Endothelial cell of umbilical vein (primary cell): ENCODE measurements at regions of chr2 and their contacts with region 1.

Region 1: DNA sequence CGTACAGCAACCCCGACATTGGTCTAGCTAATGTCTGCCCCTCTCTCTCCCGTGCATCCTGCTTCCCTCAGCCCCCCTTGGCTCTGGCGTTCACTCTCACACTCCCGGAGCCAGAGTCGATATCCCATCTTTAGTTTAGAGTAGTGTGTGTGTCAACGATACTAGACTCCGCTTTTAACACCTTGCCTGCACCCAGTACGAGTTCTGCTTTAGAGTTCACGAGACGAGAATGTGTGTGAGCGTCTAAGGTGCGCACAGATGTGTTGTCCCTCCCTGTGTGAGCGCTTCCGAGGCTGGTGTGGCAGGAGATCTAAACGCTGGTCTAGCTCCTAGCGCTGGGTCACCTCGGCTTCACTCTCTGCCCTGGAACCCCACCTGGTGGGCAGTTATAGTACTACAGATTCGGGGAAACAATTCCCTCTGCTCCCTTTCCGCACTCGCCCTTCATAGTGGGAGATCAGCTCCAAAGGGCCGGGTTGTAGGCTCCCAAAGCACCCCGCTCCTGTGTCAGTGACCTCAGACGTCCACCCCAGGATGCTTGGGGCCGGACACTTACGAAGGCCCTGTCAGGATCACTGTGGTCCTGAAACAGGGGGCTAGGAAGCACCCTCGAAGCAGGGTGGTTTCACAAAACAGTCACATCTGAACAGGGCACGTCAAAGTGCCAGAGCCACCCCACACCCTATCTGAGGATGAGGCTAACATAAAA is 2.6 kb upstream of the CYP26B1 start:
- DNase-seq: peak; percentile 77
- H3K4me3 ChIP-seq: no peak overlapping the region
- H3K27ac ChIP-seq: no peak overlapping the region
- H3K4me1 ChIP-seq: peaks cover 15% of the 10 kb centered on the region
- H3K27me3 ChIP-seq: peaks cover 33 to 48% of the 10 kb centered on the region in 2 experiments
- CTCF ChIP-seq: peak; percentile 66 to 85
- POLR2A ChIP-seq: no peak

Region 2: GRCh38 chr2:71530641-71531332 is 619.5 kb before region 1 on chr2:
- CTCF ChIA-PET with region 1: interaction called, 26 read pairs
- POLR2A ChIA-PET with region 1: no interaction called
- dilution Hi-C with region 1: no loop called
- intact Hi-C with region 1: no loop called
- DNase-seq: peak; percentile 64
- H3K4me3 ChIP-seq: no peak overlapping the region
- H3K27ac ChIP-seq: peak overlapping the region; percentile 40
- H3K4me1 ChIP-seq: peaks cover 7% of the 10 kb centered on the region
- H3K27me3 ChIP-seq: no peaks in the 10 kb centered on the region
- CTCF ChIP-seq: peak; percentile 64 to 67
- POLR2A ChIP-seq: no peak

Region 3: DNA sequence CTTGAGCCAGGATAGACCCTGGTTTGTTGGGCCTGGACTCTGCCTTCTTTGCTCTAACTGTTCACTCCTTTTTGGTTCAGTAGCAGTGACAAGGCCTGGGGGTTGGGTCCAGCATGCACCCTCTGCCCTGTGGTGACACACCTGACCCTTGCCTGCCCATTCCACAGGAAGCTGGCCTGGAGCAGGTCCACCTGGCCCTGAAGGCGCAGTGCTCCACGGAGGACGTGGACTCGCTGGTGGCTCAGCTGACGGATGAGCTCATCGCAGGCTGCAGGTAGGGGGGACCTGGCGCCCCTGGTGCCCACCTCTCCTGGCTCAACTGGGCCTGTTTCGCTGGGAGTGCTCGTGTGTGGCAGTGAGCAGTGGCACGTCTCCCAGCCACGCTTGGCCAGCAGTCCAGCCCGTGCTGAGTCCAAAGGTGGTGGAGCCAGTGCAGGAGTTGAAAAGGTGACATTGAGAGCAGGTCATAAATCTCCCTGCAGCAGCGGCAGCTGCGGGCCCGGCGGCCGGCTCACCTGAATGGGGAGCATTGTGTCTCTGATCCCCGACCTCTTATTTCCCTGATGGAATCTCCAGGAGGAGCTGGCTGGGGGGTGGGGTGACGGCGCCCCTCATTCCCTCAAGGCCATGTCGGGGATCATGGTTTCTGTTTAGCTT is 594.4 kb before region 1 on chr2:
- CTCF ChIA-PET with region 1: interaction called, 15 read pairs
- POLR2A ChIA-PET with region 1: no interaction called
- dilution Hi-C with region 1: no loop called
- intact Hi-C with region 1: no loop called
- DNase-seq: no peak
- H3K4me3 ChIP-seq: no peak overlapping the region
- H3K27ac ChIP-seq: no peak overlapping the region
- H3K4me1 ChIP-seq: peaks cover 10% of the 10 kb centered on the region
- H3K27me3 ChIP-seq: no peaks in the 10 kb centered on the region
- CTCF ChIP-seq: no peak
- POLR2A ChIP-seq: no peak

Region 4: DNA sequence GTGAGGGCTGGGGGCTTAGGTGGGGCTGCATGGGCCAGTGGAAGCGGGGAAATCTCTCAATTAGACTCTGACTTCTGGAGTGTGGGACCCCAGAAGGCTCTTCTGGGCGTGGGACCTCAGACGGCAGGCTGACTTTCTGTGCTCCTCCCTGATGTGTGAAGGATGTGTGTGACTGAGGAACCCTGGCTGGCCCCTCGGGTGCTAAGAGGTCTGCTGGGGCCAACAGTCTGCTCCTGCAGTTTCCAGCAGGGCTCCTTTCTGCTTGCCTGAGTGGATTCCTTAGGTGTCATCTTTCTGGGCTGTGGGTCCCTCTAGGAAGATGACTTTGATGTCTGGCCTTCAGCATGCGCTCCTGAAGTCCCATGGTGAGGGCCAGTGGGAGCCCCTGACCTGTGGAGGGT is 529.5 kb before region 1 on chr2:
- CTCF ChIA-PET with region 1: no interaction called
- POLR2A ChIA-PET with region 1: no interaction called
- dilution Hi-C with region 1: no loop called
- intact Hi-C with region 1: no loop called
- DNase-seq: no peak
- H3K4me3 ChIP-seq: no peak overlapping the region
- H3K27ac ChIP-seq: no peak overlapping the region
- H3K4me1 ChIP-seq: no peaks in the 10 kb centered on the region
- H3K27me3 ChIP-seq: no peaks in the 10 kb centered on the region
- CTCF ChIP-seq: no peak
- POLR2A ChIP-seq: no peak

Region 5: DNA sequence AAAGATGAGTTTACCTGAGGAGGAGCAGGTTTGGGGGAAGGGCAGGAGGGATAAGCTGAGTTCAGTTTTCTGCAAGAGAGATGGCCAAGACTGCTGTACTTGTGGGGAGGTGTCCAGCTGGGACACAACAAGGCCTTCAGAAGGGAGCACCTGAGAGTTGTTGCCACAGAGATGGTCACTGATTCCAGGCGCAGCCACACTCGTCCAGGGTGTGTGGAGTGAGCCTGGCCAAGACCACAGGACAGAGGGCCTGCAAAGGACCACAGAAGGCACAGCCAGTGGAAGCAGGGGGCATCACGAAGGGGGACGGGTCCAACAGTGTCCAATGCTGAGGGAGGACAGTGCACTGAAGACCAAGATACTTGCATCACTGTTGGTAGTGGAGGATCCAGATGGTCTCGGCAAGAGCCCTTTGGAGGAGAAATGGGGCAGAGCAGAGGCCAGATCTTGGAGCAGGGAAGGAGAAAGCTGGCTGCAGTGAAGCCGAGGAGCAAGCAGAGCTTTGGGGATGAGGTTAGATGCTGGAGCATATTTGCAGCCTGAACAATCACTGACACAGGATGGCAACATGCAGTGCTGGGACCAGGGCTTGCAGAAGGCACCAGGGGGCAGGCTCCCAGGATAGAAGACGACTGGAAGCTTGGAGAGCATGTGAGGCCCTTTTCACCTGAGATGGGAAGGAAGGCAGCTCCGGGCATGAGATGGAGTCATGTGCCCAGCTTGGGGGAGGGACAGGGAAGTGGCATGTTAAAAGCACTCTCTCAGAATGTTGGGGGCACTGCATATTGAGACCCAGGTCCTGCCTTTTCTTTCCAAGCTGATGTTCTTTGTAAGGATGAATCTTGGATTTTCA is 216.6 kb before region 1 on chr2:
- CTCF ChIA-PET with region 1: interaction called, 35 read pairs
- POLR2A ChIA-PET with region 1: no interaction called
- dilution Hi-C with region 1: no loop called
- intact Hi-C with region 1: no loop called
- DNase-seq: no peak
- H3K4me3 ChIP-seq: no peak overlapping the region
- H3K27ac ChIP-seq: no peak overlapping the region
- H3K4me1 ChIP-seq: no peaks in the 10 kb centered on the region
- H3K27me3 ChIP-seq: peaks cover 0 to 2% of the 10 kb centered on the region in 2 experiments
- CTCF ChIP-seq: peak in 1 of 2 donors; percentile 21
- POLR2A ChIP-seq: no peak

Region 6: DNA sequence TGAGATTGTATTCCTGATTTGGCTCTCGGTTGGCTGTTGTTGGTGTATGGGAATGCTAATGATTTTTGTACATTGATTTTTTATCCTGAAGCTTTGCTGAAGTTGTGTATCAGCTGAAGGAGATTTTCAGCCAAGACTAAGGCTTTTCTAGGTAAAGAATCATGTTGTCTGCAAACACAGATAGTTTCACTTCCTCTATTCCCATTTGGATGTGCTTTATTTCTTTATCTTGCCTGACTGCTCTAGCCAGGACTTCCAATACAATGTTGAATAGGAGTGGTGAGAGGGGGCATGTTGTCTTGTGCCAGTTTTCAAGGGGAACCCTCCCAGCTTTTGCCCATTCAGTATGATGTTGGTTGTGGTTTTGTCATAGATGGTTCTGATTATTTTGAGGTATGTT is 93.0 kb before region 1 on chr2:
- CTCF ChIA-PET with region 1: no interaction called
- POLR2A ChIA-PET with region 1: no interaction called
- dilution Hi-C with region 1: no loop called
- intact Hi-C with region 1: no loop called
- DNase-seq: no peak
- H3K4me3 ChIP-seq: no peak overlapping the region
- H3K27ac ChIP-seq: no peak overlapping the region
- H3K4me1 ChIP-seq: no peaks in the 10 kb centered on the region
- H3K27me3 ChIP-seq: peaks cover under 1 to 2% of the 10 kb centered on the region in 2 experiments
- CTCF ChIP-seq: no peak
- POLR2A ChIP-seq: no peak

Region 7: GRCh38 chr2:72214429-72215143 is 64.3 kb after region 1 on chr2:
- CTCF ChIA-PET with region 1: no interaction called
- POLR2A ChIA-PET with region 1: no interaction called
- dilution Hi-C with region 1: no loop called
- intact Hi-C with region 1: no loop called
- DNase-seq: peak; percentile 70
- H3K4me3 ChIP-seq: no peak overlapping the region
- H3K27ac ChIP-seq: no peak overlapping the region
- H3K4me1 ChIP-seq: no peaks in the 10 kb centered on the region
- H3K27me3 ChIP-seq: no peaks in the 10 kb centered on the region
- CTCF ChIP-seq: no peak
- POLR2A ChIP-seq: no peak

Region 8: GRCh38 chr2:72745679-72746368 is 595.5 kb after region 1 on chr2:
- CTCF ChIA-PET with region 1: interaction called, 24 read pairs
- POLR2A ChIA-PET with region 1: no interaction called
- dilution Hi-C with region 1: no loop called
- intact Hi-C with region 1: loop called (anchors 5 kb)
- DNase-seq: peak; percentile 88
- H3K4me3 ChIP-seq: no peak overlapping the region
- H3K27ac ChIP-seq: no peak overlapping the region
- H3K4me1 ChIP-seq: no peaks in the 10 kb centered on the region
- H3K27me3 ChIP-seq: no peaks in the 10 kb centered on the region
- CTCF ChIP-seq: peak; percentile 37 to 50
- POLR2A ChIP-seq: no peak

Region 9: DNA sequence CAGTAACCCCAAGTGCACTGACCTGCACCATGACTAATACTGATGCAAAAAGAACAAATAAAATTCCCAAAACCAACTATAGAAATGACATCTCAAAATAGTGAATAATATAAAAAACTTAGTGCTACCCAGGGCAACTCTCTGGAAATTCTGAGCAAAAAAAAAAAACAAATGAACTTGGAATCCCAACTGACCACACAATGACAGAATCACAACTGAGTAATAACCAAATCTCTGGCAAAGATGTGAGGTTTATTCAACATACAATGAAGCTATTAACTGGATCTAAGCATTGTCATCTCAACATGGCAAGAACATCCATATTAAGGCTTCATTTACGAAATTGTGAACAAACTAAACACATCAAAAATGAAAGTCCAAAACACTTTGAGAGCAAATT is 652.8 kb after region 1 on chr2:
- CTCF ChIA-PET with region 1: no interaction called
- POLR2A ChIA-PET with region 1: no interaction called
- dilution Hi-C with region 1: no loop called
- intact Hi-C with region 1: no loop called
- DNase-seq: no peak
- H3K4me3 ChIP-seq: no peak overlapping the region
- H3K27ac ChIP-seq: no peak overlapping the region
- H3K4me1 ChIP-seq: no peaks in the 10 kb centered on the region
- H3K27me3 ChIP-seq: no peaks in the 10 kb centered on the region
- CTCF ChIP-seq: no peak
- POLR2A ChIP-seq: no peak